Panc1 (cell line): ENCODE measurements at regions of chr3 and their contacts with region 1.

Region 1: DNA sequence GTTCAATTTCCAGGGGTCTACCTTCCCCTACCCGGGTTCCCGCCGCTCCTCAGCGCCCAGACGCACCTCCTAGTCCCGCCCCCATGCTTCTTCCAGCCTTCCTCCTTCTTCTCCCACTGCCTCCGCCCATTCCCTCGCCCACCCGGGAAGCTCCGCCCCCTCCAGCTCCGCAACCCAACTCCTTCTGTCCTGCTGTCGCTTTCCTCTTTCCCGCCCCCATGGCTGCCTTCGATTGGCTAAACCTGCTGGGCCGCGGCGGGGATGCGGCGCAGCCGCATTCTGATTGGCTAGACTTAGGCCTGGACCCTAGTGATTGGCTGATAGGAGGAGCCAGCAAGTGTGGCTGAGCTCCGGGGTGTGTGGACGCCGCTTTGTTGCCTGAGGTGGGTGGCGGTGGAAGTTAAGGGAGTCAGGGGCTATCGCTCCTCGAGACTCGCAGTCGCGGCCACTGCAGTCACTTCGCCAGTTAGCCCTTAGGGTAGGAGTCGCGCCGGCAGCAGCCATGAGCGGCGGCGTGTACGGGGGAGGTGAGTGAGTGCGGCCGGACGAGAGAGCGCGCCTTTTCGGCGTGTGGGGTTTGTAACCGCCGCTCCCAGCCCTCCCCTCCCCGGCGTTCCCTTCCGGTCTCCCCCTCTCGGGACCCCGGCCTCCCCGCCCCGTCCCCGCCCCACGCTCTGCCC is at the start of gene ACTL6A:
- DNase-seq: peak; percentile 99
- ATAC-seq: peak; percentile 97
- H3K4me3 ChIP-seq: peak within 1 kb of the TSS; percentile 77 to 86
- H3K27ac ChIP-seq: peak within 1 kb of the TSS; percentile 92
- H3K4me1 ChIP-seq: peaks cover 16% of the 10 kb centered on the region
- H3K27me3 ChIP-seq: no peaks in the 10 kb centered on the region
- CTCF ChIP-seq: no peak
- total RNA-seq, gene ACTL6A: 122 TPM

Region 2: GRCh38 chr3:177777699-177778098 is 1785.0 kb before region 1 on chr3:
- CTCF ChIA-PET with region 1: interaction called, 10 read pairs
- POLR2A ChIA-PET with region 1: no interaction called
- in situ Hi-C with region 1: no loop called
- intact Hi-C with region 1: no loop called
- DNase-seq: peak; percentile 33
- ATAC-seq: peak; percentile 82
- H3K4me3 ChIP-seq: no peak overlapping the region
- H3K27ac ChIP-seq: 0 out of 2 replicates have a peak overlapping the region, but pooled peaks have one; percentile 21
- H3K4me1 ChIP-seq: no peaks in the 10 kb centered on the region; the same call in 1 of the 2 replicates
- H3K27me3 ChIP-seq: no peaks in the 10 kb centered on the region
- CTCF ChIP-seq: peak; percentile 70

Region 3: DNA sequence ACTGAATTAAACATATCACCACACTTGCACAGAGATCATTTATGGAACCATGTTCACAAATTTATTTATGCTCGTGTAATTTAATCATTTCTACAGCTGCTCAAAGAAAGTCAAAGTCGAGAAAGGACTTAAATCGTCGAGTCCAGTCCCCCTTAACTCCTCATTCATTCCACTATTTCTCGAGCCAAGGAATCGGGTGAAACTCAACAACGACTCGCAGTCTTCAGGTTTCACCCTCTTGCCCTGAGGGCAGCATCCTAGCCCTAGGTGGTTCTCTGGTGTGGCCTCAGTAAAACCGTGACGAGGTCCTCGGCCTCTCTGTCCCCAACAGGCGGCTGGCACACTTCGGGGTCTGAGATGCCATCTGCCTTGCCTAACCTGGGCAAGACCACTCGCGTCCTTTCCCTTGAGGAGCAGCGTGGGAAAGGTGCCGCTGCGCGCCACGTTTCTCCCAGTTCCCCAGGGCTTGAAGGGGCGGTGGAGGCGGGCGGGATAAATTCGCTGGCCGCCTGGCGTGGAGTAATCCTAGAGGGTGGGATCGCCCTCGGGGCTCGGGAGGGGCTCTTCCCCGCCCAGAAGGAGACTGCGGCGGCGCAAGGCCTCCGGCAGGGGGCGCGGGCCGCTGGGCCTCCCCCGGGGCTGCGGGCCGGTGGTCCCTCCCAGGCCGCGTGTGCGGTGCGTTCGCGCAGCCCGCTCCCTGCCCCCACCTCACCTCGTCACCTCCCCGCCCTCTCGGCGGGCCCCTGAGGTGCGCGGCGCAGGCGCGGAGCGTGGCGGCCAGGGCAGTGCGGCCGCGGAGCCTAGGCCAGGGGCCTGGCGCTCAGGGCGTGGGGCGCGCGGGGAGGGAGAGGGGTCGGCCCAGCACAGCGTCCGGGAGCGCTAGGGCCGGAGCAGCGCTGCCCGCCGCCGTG is 240.2 kb before region 1 on chr3 and contains the start of gene ZNF639:
- CTCF ChIA-PET with region 1: no interaction called
- POLR2A ChIA-PET with region 1: no interaction called
- in situ Hi-C with region 1: no loop called
- intact Hi-C with region 1: loop called (anchors 5 kb)
- DNase-seq: peak; percentile 33
- ATAC-seq: peak; percentile 95
- H3K4me3 ChIP-seq: peak within 1 kb of the TSS; percentile 87 to 89
- H3K27ac ChIP-seq: peak within 1 kb of the TSS; percentile 95
- H3K4me1 ChIP-seq: peaks cover 20% of the 10 kb centered on the region
- H3K27me3 ChIP-seq: no peaks in the 10 kb centered on the region
- CTCF ChIP-seq: peak; percentile 96
- total RNA-seq, gene ZNF639: 56.1 TPM

Region 4: GRCh38 chr3:179348325-179349013 is 214.3 kb before region 1 on chr3:
- CTCF ChIA-PET with region 1: no interaction called
- POLR2A ChIA-PET with region 1: no interaction called
- in situ Hi-C with region 1: no loop called
- intact Hi-C with region 1: no loop called
- DNase-seq: no peak
- ATAC-seq: no peak
- H3K4me3 ChIP-seq: peak overlapping the region; percentile 70 to 89
- H3K27ac ChIP-seq: peak overlapping the region; percentile 84
- H3K4me1 ChIP-seq: peaks cover 12% of the 10 kb centered on the region
- H3K27me3 ChIP-seq: no peaks in the 10 kb centered on the region
- CTCF ChIP-seq: no peak

Region 5: DNA sequence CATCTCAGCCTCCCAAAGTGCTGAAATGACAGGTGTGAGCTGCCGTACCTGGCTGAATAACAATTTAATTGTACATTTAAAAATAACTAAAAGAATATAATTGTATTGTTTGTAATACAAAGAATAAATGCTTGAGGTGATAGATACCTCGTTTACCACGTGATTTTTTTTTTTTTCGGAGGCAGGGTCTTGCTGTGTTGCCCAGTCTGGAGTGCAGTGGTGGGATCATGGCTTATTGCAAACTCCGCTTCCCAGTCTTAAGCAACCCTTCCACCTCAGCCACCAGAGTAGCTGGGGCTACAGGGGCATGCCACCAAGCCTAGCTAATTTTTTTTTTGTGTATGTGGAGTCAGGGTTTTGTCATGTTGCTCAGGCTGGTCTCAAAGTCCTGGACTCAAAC is 199.4 kb before region 1 on chr3:
- CTCF ChIA-PET with region 1: no interaction called
- POLR2A ChIA-PET with region 1: no interaction called
- in situ Hi-C with region 1: no loop called
- intact Hi-C with region 1: no loop called
- DNase-seq: no peak
- ATAC-seq: no peak
- H3K4me3 ChIP-seq: no peak overlapping the region
- H3K27ac ChIP-seq: no peak overlapping the region
- H3K4me1 ChIP-seq: no peaks in the 10 kb centered on the region
- H3K27me3 ChIP-seq: no peaks in the 10 kb centered on the region
- CTCF ChIP-seq: no peak

Region 6: DNA sequence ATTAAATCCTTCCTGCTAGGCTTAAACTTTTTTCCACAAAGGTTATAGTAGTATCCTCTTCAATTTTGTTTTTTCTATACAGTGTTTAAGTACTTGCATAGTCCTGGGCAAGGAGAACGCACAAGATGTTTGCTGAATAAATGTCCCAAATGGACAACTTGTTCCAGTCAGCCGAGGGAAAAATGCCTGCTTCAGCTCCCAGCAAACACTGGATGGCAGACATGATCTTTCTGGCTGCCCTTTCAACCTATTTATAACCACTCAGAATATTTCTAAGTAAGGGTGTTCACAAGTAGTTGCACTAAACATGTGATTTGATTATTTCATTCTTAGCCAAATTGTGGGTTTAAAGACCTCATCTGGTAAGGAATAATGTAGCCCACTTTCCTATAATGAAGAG is 141.2 kb before region 1 on chr3:
- CTCF ChIA-PET with region 1: interaction called, 3 read pairs
- POLR2A ChIA-PET with region 1: no interaction called
- in situ Hi-C with region 1: no loop called
- intact Hi-C with region 1: loop called (anchors 2 kb)
- DNase-seq: peak; percentile 4
- ATAC-seq: peak; percentile 63; the same call in 1 of the 2 replicates
- H3K4me3 ChIP-seq: no peak overlapping the region
- H3K27ac ChIP-seq: no peak overlapping the region
- H3K4me1 ChIP-seq: no peaks in the 10 kb centered on the region
- H3K27me3 ChIP-seq: no peaks in the 10 kb centered on the region
- CTCF ChIP-seq: peak; percentile 71

Region 7: DNA sequence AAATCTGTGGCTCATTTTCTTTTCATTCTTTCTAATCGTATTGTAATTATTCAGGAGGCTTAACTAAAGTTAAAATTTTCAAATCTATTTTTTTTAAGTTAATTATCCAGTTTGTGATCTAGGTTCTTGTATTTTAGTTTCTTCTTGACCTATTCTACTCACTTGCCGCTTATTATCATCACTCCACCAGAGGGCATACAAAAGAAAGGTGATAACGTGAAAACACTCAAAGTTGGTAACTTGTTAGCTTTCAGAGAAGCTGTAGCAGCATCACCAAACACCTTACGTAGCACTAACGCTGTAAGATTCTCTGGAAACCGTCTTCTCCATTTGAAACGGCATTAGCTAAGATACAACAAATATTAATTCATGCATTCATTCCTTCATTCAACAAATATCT is 116.2 kb before region 1 on chr3:
- CTCF ChIA-PET with region 1: interaction called, 4 read pairs
- POLR2A ChIA-PET with region 1: interaction called, 3 read pairs
- in situ Hi-C with region 1: no loop called
- intact Hi-C with region 1: loop called (anchors 1 kb)
- DNase-seq: no peak
- ATAC-seq: no peak
- H3K4me3 ChIP-seq: no peak overlapping the region
- H3K27ac ChIP-seq: no peak overlapping the region
- H3K4me1 ChIP-seq: 0 out of 2 replicates have a peak, but pooled peaks cover 3% of the 10 kb centered on the region
- H3K27me3 ChIP-seq: no peaks in the 10 kb centered on the region
- CTCF ChIP-seq: peak; percentile 60; the same call in 1 of the 2 replicates